ENCODE measurements at regions of chr1 and their contacts with region 1.

Region 1: DNA sequence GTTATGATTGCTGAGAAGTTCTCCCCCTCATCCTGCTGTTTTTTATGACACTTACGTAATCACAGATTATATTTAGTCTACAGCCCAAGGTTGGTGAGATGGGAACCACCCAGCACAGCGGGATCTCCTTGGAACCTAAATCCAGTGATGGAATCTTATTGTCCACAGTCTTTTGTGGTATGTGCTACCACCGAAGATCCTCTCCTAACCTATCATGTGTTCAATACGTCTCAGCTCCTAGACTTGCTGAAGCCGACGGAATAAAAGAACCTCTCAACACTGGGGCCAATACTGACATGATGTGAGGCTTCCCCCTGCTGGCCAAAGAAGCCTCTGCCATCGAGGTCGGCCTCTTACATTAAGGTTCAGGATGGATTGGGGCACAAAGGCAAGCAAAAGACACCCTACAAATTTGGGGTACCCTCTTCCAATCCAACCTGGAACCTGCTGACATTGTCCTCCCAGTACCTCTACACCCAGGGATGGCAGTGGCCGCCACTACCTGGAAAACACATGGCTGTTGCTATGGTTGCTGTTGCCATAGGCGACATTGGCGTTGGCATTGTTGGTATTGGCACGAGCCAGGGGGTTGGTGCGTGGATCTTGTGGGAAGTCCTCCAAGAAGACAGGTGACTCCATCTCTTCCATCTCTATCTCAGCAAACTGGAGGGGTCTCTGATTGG is 19.4 kb upstream of the KIF21B start:
- DNase-seq: peak; percentile 79
- H3K4me3 Mint-ChIP-seq: no peak overlapping the region
- H3K27ac Mint-ChIP-seq: no peak overlapping the region
- H3K4me1 Mint-ChIP-seq: peaks cover 3% of the 10 kb centered on the region
- H3K27me3 Mint-ChIP-seq: peaks cover 9% of the 10 kb centered on the region

Region 2: DNA sequence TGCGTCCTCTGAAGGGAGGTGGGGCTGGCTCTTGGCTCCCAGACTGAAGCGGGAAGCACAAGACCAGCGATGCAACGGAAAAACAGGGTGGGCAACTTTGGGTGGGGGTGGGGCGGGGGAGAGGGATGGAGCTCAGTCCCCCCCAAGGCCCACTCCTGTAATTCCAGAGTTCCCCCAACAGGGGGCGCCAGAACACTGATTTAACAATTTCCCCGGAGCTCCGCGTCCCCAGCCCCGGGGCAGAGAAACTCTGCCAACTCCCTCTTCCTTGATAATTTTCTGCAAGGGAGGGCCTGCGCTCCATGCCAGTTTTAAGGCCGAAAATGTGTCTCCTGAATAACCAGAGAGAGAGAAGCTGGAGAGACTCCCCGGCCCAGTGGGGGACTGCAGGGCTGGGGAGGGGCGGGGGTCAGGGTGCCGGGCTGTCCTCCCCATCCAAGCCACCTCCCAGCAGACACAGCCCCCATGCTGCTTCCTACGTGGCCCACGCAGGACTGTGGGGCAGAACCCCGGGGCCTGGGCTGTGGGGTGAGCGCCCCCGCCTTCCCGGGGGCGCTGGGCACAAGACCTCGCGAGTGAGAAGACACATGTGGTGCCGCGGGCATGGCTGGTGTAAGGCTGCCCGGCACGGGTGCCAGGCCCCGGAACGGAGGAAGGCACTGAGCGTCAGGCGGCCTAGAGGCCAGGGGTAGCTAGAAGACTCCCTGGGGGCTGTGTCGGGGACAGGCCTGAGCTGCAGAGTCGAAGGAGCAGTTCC is 70.8 kb before region 1 on chr1:
- CTCF ChIA-PET with region 1: interaction called, 15 read pairs
- POLR2A ChIA-PET with region 1: no interaction called
- DNase-seq: peak; percentile 68
- H3K4me3 Mint-ChIP-seq: no peak overlapping the region
- H3K27ac Mint-ChIP-seq: no peak overlapping the region
- H3K4me1 Mint-ChIP-seq: no peaks in the 10 kb centered on the region
- H3K27me3 Mint-ChIP-seq: no peaks in the 10 kb centered on the region

Region 3: GRCh38 chr1:200979574-200980451 is 63.1 kb before region 1 on chr1:
- CTCF ChIA-PET with region 1: interaction called, 12 read pairs
- POLR2A ChIA-PET with region 1: no interaction called
- DNase-seq: peak; percentile 72
- H3K4me3 Mint-ChIP-seq: no peak overlapping the region
- H3K27ac Mint-ChIP-seq: no peak overlapping the region
- H3K4me1 Mint-ChIP-seq: no peaks in the 10 kb centered on the region
- H3K27me3 Mint-ChIP-seq: no peaks in the 10 kb centered on the region

Region 4: DNA sequence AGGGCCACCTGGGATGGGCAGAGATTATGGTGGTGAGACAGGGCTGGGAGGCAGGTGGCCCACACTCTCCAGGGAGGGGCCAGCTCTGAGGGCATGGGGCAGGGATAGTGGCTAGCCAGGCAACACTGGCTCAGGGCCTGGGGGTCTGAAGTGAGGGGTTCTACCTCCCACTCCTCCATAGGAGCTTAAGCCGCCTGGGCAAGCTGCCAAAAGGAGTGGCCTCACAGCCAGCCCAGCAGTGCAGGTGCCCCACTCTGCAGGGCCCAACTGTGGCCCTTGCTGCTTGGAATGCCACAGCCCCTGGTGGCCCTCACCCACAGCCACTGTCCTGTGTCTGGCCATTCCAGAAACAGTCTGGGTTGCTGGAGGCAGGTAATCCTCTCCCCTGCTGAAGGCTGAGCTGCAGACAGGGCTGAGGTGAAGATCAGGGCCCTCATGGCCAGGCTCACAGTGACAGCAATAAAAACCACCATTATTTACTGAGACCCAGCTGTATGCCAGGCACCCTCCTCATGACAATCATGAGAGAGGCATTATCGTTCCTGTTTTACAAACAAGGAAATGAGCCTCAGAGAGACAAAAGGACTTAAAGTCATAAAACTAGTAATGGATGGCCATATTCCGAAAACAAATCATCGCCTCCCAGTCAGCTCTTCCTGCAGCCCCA is 50.4 kb before region 1 on chr1:
- CTCF ChIA-PET with region 1: no interaction called
- POLR2A ChIA-PET with region 1: no interaction called
- DNase-seq: no peak
- H3K4me3 Mint-ChIP-seq: no peak overlapping the region
- H3K27ac Mint-ChIP-seq: no peak overlapping the region
- H3K4me1 Mint-ChIP-seq: no peaks in the 10 kb centered on the region
- H3K27me3 Mint-ChIP-seq: no peaks in the 10 kb centered on the region

Region 5: GRCh38 chr1:201023517-201023902 is 19.4 kb before region 1 on chr1 and contains the start of gene KIF21B:
- CTCF ChIA-PET with region 1: interaction called, 152 read pairs
- POLR2A ChIA-PET with region 1: no interaction called
- DNase-seq: peak; percentile 92
- H3K4me3 Mint-ChIP-seq: peak within 1 kb of the TSS; percentile 91
- H3K27ac Mint-ChIP-seq: peak within 1 kb of the TSS; percentile 99
- H3K4me1 Mint-ChIP-seq: peaks cover 70% of the 10 kb centered on the region
- H3K27me3 Mint-ChIP-seq: no peaks in the 10 kb centered on the region
- total RNA-seq, gene KIF21B: 104 to 107 TPM

Region 6: GRCh38 chr1:201126832-201127754 is 84.2 kb after region 1 on chr1 and contains the start of gene ASCL5:
- CTCF ChIA-PET with region 1: no interaction called
- POLR2A ChIA-PET with region 1: no interaction called
- DNase-seq: no peak
- H3K4me3 Mint-ChIP-seq: no peak within 1 kb of the TSS
- H3K27ac Mint-ChIP-seq: no peak within 1 kb of the TSS
- H3K4me1 Mint-ChIP-seq: no peaks in the 10 kb centered on the region
- H3K27me3 Mint-ChIP-seq: peaks cover 11% of the 10 kb centered on the region
- total RNA-seq, gene ASCL5: not detected